ENCODE measurements at regions of chr12 and their contacts with region 1.

Region 1: GRCh38 chr12:53701518-53702260 is 25.6 kb downstream of the CALCOCO1 start:
- DNase-seq: peak; percentile 81 to 90 (median 87)
- H3K4me3 ChIP-seq: no peak overlapping the region
- H3K27ac ChIP-seq: peak overlapping the region in 4 of 59 donors; percentile 19 to 61 (median 42)
- H3K27me3 ChIP-seq: peaks cover 0 to 9% (median 0%) of the 10 kb centered on the region in 45 donors
- CTCF ChIP-seq: peak; percentile 61 to 99 (median 92)

Region 2: DNA sequence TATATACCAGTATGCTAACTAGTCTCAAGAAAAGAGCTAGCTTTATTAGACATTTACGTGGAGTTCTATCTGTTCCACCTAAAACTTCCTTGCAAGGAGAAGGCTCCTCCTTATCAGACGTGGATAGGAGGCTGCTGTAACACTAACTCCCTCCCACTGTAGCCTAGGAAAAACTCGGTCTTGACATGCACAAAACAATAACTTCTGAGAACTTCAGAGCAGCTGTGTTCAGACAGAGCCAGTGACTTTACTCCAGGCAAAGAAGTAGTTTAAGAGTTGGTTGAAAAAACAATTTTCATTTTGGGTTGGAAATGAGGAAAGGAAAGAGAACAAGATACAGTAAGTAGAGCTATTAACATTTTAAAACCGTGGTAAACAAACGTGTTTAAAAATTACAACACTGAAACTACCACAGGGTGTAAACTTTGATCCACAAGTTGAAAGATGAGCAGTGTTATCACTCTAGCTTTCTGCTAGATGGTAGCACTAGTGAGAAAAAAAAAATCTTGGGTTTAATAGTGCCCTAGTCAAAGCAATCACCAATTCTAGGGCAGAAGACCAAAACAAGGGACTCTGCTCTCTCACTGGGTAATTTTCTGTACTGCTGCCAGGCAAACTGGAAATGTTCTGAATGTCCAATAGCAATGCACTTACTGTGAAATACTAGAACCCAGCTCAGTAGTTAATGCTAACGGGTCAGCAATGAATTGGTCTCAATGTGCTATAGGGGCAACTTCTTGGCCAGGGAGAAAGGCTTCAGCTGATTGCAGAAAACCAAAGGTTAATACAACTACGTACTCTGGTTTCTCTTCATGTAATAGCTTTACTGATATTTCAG is 77.9 kb before region 1 on chr12:
- intact Hi-C with region 1: no loop called
- DNase-seq: peak in 1 of 10 donors; percentile 72
- H3K4me3 ChIP-seq: peak overlapping the region; percentile 13 to 94 (median 77)
- H3K27ac ChIP-seq: peak overlapping the region; percentile 13 to 100 (median 97)
- H3K27me3 ChIP-seq: no peaks in the 10 kb centered on the region
- CTCF ChIP-seq: peak in 1 of 56 donors; percentile 17

Region 3: DNA sequence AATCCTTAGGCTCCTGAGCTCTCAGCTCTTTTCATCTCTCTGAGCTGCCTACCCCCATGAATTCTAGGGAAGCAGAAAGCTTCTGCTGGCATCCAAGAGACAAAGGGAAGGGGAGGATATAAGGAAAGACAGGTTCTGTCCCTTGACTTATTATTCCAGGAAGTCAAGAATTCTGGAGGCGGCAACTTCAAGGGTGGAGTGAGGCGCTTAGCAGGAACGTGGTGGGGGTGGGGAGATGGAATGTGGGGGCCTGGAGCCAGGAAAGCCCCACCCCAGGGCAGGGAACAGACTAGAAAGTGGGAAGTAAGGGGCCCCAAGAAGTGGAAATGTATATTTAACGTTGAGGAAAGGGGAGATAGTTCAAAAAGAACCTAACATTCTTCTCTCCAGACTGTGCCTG is 24.1 kb after region 1 on chr12:
- intact Hi-C with region 1: loop called in 1 of 2 experiments (anchors 2 kb)
- DNase-seq: no peak
- H3K4me3 ChIP-seq: peak overlapping the region in 46 of 59 donors; percentile 67 to 100 (median 89)
- H3K27ac ChIP-seq: no peak overlapping the region
- H3K27me3 ChIP-seq: no peaks in the 10 kb centered on the region
- CTCF ChIP-seq: no peak

Region 4: DNA sequence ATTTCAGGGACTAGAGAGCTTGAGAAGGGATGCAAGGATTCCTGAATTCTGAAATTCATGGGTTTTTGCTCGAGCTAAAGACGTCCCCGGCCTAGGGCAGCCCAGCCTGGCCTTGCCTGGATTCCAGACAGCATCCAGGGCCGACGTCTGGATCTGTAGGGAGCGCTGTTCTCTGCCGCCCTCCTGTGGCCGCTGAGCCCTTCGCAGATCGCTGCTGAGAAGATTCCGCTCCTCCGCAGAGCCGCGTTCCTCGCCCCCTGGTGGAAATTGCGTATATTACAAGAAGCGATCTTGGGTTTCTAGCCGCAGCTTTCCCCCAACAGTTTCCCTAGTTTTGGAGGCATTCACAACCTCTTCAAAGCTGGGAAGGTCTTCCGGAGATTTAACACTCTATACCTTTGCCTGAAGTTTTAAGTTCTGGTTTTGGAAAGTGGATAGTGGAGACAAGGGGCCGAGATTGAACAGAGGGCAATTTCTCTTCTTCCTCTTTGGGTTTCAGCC is 45.0 kb after region 1 on chr12:
- intact Hi-C with region 1: loop called (anchors 1 to 2 kb)
- DNase-seq: peak; percentile 87 to 96 (median 93)
- H3K4me3 ChIP-seq: peak overlapping the region in 4 of 59 donors; percentile 5 to 28 (median 11)
- H3K27ac ChIP-seq: peak overlapping the region in 30 of 59 donors; percentile 10 to 80 (median 51)
- H3K27me3 ChIP-seq: peaks cover 0 to 23% (median 0%) of the 10 kb centered on the region in 45 donors
- CTCF ChIP-seq: peak; percentile 99 to 100 (median 100)

Region 5: GRCh38 chr12:54154681-54155186 is 453.0 kb after region 1 on chr12:
- intact Hi-C with region 1: no loop called
- DNase-seq: no peak
- H3K4me3 ChIP-seq: no peak overlapping the region
- H3K27ac ChIP-seq: no peak overlapping the region
- H3K27me3 ChIP-seq: peaks cover 0 to 17% (median 0%) of the 10 kb centered on the region in 45 donors
- CTCF ChIP-seq: no peak

Measured in dorsolateral prefrontal cortex (tissue), 120 donors.